CD8-positive, alpha-beta memory T cell (primary cell): ENCODE measurements at regions of chr7 and their contacts with region 1.

Region 1: DNA sequence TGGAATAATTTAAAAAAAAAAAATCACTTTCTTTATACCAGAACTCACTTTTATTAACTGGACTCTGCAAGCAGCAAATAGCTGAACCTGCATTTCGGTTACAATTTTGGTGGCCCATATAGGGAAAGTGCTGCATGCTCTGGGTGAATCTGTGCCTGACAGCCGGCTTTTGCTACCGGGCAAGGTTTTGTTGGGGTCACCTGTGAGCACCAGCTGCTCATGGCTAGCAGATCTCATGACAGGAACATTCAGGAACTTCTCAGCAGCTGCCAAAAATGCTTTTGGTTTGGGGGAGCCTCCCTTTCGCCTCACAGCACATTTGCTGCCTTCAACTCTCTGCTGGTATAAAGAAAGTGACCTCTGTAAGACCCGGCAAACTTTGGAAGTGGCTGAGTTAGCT is 13.2 kb upstream of the CREB3L2 start:
- DNase-seq: no peak
- H3K4me3 ChIP-seq: no peak overlapping the region
- H3K4me3 Mint-ChIP-seq: no peak overlapping the region
- H3K27ac ChIP-seq: no peak overlapping the region
- H3K27ac Mint-ChIP-seq: no peak overlapping the region
- H3K4me1 ChIP-seq: no peaks in the 10 kb centered on the region
- H3K4me1 Mint-ChIP-seq: no peaks in the 10 kb centered on the region
- H3K27me3 ChIP-seq: no peaks in the 10 kb centered on the region
- H3K27me3 Mint-ChIP-seq: peaks cover 0 to 6% of the 10 kb centered on the region in 2 donors

Region 2: DNA sequence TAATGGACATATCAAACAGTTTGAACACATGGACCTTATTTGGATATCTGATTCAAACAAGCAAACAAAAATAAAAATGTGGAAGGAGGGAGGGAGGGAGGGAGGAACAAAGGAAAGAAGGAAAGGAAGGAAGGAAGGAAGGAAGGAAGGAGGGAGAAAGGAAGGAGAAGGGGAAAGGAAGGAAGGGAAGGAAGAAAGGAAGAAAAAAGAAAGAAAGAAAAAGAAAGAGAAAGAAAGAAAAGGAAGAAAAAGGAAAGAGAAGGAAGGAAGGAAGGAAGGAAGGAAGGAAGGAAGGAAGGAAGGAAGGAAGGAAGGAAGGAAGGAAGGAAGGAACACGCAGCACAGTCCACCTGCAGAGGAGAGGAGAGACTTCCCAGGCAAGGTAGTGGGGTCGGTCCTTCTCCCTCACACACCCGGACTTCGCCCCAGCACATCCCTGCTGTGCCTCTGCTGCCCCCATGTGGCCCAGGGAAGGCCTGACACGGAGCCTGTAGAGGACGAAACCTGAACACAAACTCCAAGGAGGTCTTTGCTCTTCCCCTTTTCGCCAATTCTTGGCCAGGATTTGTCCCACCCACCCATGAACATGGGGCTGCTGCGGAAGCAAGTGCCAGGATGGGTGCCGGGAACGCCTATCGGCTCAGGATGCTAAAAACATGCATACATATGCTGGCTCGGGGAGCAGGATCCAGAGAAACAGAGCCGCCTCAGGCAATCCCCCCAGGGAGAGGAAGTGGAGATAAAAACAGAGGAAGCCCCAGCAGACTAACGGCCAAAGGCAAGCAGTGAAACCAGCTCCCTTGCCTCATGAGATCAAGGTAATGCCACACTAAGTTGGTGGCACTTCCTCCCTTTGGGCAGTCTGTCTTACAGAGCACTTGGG is 116.0 kb before region 1 on chr7:
- CTCF ChIA-PET with region 1: interaction called, 303 read pairs
- POLR2A ChIA-PET with region 1: no interaction called
- DNase-seq: peak; percentile 48 to 77 (median 64)
- H3K4me3 ChIP-seq: no peak overlapping the region
- H3K4me3 Mint-ChIP-seq: peak overlapping the region in 6 of 7 donors; percentile 15 to 58 (median 42)
- H3K27ac ChIP-seq: no peak overlapping the region
- H3K27ac Mint-ChIP-seq: peak overlapping the region; percentile 43 to 88 (median 72)
- H3K4me1 ChIP-seq: no peaks in the 10 kb centered on the region
- H3K4me1 Mint-ChIP-seq: peaks cover 20 to 25% (median 21%) of the 10 kb centered on the region in 3 donors
- H3K27me3 ChIP-seq: no peaks in the 10 kb centered on the region
- H3K27me3 Mint-ChIP-seq: no peaks in the 10 kb centered on the region